Activated CD8-positive, alpha-beta T cell treated with anti-CD3 and anti-CD28 coated beads for 36 hours (primary cell): ENCODE measurements at regions of chr14 and their contacts with region 1.

Region 1: GRCh38 chr14:24690492-24690891 is 56.5 kb upstream of the GZMB start:
- DNase-seq: peak; percentile 51
- ATAC-seq: no peak
- H3K4me3 Mint-ChIP-seq: no peak overlapping the region
- H3K27ac Mint-ChIP-seq: no peak overlapping the region
- H3K4me1 Mint-ChIP-seq: peaks cover 32% of the 10 kb centered on the region
- H3K27me3 Mint-ChIP-seq: no peaks in the 10 kb centered on the region
- CTCF ChIP-seq: peak; percentile 21

Region 2: GRCh38 chr14:24456980-24457379 is 233.5 kb before region 1 on chr14:
- CTCF ChIA-PET with region 1: no interaction called
- POLR2A ChIA-PET with region 1: no interaction called
- intact Hi-C with region 1: no loop called
- DNase-seq: no peak
- ATAC-seq: no peak
- H3K4me3 Mint-ChIP-seq: no peak overlapping the region
- H3K27ac Mint-ChIP-seq: no peak overlapping the region
- H3K4me1 Mint-ChIP-seq: no peaks in the 10 kb centered on the region
- H3K27me3 Mint-ChIP-seq: peaks cover 2% of the 10 kb centered on the region
- CTCF ChIP-seq: no peak

Region 3: GRCh38 chr14:24673534-24674203 is 16.8 kb before region 1 on chr14:
- CTCF ChIA-PET with region 1: interaction called, 24 read pairs
- POLR2A ChIA-PET with region 1: interaction called, 46 read pairs
- intact Hi-C with region 1: loop called (anchors 1 kb)
- DNase-seq: peak; percentile 91
- ATAC-seq: peak; percentile 65
- H3K4me3 Mint-ChIP-seq: peak overlapping the region; percentile 71
- H3K27ac Mint-ChIP-seq: peak overlapping the region; percentile 99
- H3K4me1 Mint-ChIP-seq: peaks cover 85% of the 10 kb centered on the region
- H3K27me3 Mint-ChIP-seq: no peaks in the 10 kb centered on the region
- CTCF ChIP-seq: no peak

Region 4: DNA sequence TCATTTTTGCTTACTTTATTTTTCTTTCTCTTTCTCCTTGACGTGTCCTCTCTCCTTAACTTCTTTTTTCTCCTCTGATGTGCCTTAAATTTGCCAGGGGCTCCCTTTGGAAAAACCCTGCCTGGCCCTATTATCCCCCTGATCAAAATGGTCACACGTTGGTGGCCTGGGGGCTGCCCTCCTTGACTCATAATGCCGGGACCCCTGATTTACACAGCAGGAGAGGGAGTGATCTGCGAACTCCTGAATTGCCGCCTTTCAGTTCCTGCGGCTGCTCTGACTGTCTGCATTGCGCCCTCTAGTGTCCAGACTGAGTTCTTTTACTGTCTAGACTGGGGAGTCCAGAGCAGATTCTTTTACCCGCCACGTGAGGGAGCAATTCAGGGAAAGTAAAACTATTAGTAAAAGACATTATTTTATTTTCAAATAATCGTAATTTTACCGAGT is 11.7 kb before region 1 on chr14:
- CTCF ChIA-PET with region 1: interaction called, 24 read pairs
- POLR2A ChIA-PET with region 1: interaction called, 46 read pairs
- intact Hi-C with region 1: loop called (anchors 1 kb)
- DNase-seq: peak; percentile 85
- ATAC-seq: peak; percentile 42
- H3K4me3 Mint-ChIP-seq: peak overlapping the region; percentile 81
- H3K27ac Mint-ChIP-seq: peak overlapping the region; percentile 96
- H3K4me1 Mint-ChIP-seq: peaks cover 64% of the 10 kb centered on the region
- H3K27me3 Mint-ChIP-seq: no peaks in the 10 kb centered on the region
- CTCF ChIP-seq: peak; percentile 99